ENCODE measurements at regions of chr20 and their contacts with region 1.

Region 1: GRCh38 chr20:64079273-64080012 is at the start of gene RGS19:
- DNase-seq: peak; percentile 71
- H3K4me3 Mint-ChIP-seq: peak within 1 kb of the TSS; percentile 95
- H3K27ac Mint-ChIP-seq: peak within 1 kb of the TSS; percentile 80
- H3K4me1 Mint-ChIP-seq: peaks cover 24% of the 10 kb centered on the region
- H3K27me3 Mint-ChIP-seq: peaks cover 21% of the 10 kb centered on the region
- total RNA-seq, gene RGS19: 42.0 and 43.3 TPM in 2 replicates

Region 2: GRCh38 chr20:64062596-64063388 is 16.7 kb before region 1 on chr20 and contains the start of gene TCEA2:
- intact Hi-C with region 1: loop called (anchors 1 kb)
- DNase-seq: peak; percentile 93
- H3K4me3 Mint-ChIP-seq: peak within 1 kb of the TSS; percentile 89
- H3K27ac Mint-ChIP-seq: peak within 1 kb of the TSS; percentile 88
- H3K4me1 Mint-ChIP-seq: peaks cover 46% of the 10 kb centered on the region
- H3K27me3 Mint-ChIP-seq: no peaks in the 10 kb centered on the region
- total RNA-seq, gene TCEA2: 49.0 and 49.9 TPM in 2 replicates

Region 3: DNA sequence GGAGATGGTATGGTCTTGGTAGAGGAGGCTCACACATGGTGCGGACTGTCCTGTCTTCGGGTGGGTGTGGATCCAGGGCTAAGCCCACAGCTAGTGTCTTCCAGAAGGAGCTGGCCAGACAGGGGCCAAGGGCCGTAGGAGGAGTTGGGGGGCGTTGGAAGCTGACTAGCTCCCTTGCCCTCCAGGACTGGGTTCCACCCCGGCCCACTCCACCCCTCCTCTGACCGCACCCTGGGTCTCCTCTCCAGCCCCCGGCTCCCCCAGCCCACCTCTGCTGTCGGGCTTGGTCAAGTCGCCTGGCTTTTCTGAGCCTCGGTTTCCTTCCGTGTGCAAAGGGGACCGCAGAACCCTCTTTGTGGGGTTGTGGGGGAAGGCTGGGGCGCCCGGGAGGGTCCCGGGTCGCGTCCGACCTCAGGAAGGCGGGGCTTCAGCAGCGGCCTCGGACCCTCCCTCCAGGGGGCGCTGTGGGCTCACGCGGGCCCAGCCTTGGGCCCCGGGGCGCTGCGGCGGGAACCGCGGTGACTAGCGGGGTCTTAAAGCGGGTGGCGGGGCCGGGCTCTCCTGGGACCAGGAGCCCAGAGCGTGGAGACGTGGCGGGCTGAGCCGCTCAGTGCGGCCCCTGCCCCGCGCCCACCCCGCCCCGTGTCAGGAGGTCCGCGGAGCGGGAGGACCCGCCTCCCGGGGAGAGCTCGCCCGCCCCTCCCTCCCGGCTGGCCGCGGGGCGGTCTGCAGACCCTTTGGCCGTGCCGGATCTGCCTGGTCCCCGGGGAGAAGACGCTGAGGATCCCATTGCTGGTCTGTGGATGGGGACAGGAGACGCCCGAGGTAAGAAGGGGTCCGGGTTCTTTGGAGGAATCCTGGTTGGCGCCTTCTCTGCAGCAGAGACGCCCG is 22.5 kb after region 1 on chr20:
- intact Hi-C with region 1: loop called (anchors 2 kb)
- DNase-seq: peak; percentile 57
- H3K4me3 Mint-ChIP-seq: peak overlapping the region; percentile 34
- H3K27ac Mint-ChIP-seq: no peak overlapping the region
- H3K4me1 Mint-ChIP-seq: peaks cover 2% of the 10 kb centered on the region
- H3K27me3 Mint-ChIP-seq: peaks cover 24% of the 10 kb centered on the region

Region 4: DNA sequence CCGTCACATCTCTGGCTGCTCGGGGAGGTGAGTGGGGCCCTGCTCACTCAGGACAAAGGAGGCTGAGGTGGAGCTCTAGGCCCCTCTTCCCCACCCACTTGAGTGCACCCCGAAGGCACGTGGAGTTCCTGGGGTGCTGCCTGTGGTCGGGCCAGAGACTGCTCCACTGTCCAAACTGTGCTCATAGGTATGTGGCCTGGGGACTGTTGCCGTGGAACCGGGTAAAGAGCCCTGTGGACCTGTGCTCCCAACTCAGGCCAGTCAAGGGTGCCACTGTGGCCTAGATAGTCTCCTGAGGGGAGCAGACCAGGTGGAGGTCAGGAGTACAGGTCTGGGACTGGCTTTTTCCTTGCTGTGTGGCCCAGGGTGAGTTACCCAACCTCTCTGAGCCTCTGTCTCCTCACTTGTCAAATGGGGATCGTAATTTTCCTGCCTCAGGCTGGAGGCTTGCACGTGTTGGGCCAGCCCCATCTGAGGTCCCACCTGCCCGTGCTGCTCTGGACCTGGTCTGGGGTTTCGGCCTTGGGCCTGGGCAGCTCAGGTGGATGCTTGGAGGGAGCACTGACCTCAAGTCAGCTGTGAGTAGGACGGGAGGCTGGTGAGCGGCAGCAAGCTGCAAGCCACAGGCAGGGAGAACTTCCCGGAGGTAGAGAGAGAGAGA is 40.4 kb after region 1 on chr20:
- intact Hi-C with region 1: loop called (anchors 2 kb)
- DNase-seq: peak; percentile 25
- H3K4me3 Mint-ChIP-seq: peak overlapping the region; percentile 60
- H3K27ac Mint-ChIP-seq: no peak overlapping the region
- H3K4me1 Mint-ChIP-seq: peaks cover 9% of the 10 kb centered on the region
- H3K27me3 Mint-ChIP-seq: peaks cover 10% of the 10 kb centered on the region

Measured in activated T-helper 2 cell treated with anti-CD3 and anti-CD28 coated beads, Interferon-gamma antibody, Interleukin-2, Interleukin-4, amounts not matched to agents 10 μg/mL and 5 μg/mL and 100 μg/mL, durations not matched to agents 14 hours and 24 hours and 36 hours (primary cell).